Prostate gland (tissue), 2 donors: ENCODE measurements at regions of chr19 and their contacts with region 1.

Region 1: GRCh38 chr19:920051-920864 is 3.1 kb downstream of the KISS1R start:
- DNase-seq: no peak
- H3K4me3 ChIP-seq: peak overlapping the region in 1 of 2 donors; percentile 16
- H3K27ac ChIP-seq: no peak overlapping the region
- H3K4me1 ChIP-seq: peaks cover 7% of the 10 kb centered on the region
- H3K27me3 ChIP-seq: peaks cover 20% of the 10 kb centered on the region
- CTCF ChIP-seq: no peak
- POLR2A ChIP-seq: no peak

Region 2: GRCh38 chr19:308381-309205 is 611.7 kb before region 1 on chr19:
- intact Hi-C with region 1: no loop called
- DNase-seq: no peak
- H3K4me3 ChIP-seq: no peak overlapping the region
- H3K27ac ChIP-seq: no peak overlapping the region
- H3K4me1 ChIP-seq: no peaks in the 10 kb centered on the region
- H3K27me3 ChIP-seq: no peaks in the 10 kb centered on the region
- CTCF ChIP-seq: no peak
- POLR2A ChIP-seq: no peak

Region 3: DNA sequence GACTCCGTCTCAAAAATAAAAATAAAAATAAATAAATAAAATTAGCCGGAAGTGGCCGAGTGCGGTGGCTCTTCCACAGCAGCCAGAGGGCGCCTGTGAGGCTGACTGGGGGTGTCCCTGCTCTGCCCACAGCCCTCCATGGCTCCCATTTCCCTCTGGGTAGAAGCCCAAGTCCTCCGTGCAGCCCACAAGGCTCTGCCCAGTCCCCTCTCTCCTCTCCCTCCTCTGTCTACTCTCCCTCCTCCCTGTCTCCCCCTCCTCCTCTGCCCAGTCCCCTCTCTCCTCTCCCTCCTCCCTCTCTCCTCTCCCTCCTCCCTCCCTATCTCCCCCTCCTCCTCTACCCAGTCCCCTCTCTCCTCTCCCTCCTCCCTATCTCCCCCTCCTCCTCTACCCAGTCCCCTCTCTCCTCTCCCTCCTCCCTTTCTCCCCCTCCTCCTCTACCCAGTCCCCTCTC is 148.9 kb before region 1 on chr19:
- intact Hi-C with region 1: loop called (anchors 2 kb)
- DNase-seq: no peak
- H3K4me3 ChIP-seq: no peak overlapping the region
- H3K27ac ChIP-seq: no peak overlapping the region
- H3K4me1 ChIP-seq: no peaks in the 10 kb centered on the region
- H3K27me3 ChIP-seq: no peaks in the 10 kb centered on the region
- CTCF ChIP-seq: peak in 1 of 4 experiments; percentile 28
- POLR2A ChIP-seq: no peak

Region 4: DNA sequence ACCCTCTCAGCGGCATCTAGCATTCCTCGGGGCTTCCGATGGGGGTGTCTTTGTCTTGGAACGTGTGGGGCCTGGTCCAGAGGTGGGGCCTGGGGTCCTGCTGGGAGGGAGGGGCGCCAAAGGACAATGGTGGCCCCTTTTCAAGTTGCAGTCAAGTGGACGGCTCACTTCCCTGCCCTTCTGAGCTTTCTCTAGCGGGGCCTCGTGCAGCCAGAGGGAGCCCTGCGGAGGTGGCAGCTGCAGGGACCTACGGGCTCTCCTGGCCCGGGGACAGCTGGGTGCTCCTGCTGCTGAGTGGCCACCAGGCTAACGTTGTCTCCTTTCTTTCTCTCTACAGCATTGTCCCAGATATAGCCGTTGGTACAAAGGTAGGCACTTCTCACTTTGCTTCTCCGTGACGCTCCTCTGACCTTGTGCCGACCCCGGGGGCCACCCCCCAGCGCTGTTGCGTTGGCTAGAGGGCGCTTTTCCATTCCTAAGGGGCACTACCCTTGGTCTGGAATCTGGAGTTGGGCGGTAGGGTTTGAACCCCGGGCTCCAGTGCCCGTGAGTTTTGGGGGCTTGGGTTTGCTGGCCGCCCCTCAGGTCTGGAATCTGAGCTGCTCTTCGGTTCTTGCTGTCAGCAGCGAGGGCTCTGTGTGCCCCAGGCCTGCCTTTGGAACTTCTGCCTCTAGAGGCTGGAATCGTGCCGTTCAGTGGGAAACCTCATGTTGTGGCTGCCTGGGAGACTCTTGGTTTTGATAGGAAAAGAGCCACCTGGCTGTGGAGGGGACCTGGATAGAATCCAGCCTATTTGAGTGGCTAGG is 121.0 kb before region 1 on chr19:
- intact Hi-C with region 1: no loop called
- DNase-seq: no peak
- H3K4me3 ChIP-seq: peak overlapping the region; percentile 97 to 99
- H3K27ac ChIP-seq: peak overlapping the region; percentile 95 to 100
- H3K4me1 ChIP-seq: peaks cover 42% of the 10 kb centered on the region
- H3K27me3 ChIP-seq: no peaks in the 10 kb centered on the region
- CTCF ChIP-seq: no peak
- POLR2A ChIP-seq: no peak

Region 5: DNA sequence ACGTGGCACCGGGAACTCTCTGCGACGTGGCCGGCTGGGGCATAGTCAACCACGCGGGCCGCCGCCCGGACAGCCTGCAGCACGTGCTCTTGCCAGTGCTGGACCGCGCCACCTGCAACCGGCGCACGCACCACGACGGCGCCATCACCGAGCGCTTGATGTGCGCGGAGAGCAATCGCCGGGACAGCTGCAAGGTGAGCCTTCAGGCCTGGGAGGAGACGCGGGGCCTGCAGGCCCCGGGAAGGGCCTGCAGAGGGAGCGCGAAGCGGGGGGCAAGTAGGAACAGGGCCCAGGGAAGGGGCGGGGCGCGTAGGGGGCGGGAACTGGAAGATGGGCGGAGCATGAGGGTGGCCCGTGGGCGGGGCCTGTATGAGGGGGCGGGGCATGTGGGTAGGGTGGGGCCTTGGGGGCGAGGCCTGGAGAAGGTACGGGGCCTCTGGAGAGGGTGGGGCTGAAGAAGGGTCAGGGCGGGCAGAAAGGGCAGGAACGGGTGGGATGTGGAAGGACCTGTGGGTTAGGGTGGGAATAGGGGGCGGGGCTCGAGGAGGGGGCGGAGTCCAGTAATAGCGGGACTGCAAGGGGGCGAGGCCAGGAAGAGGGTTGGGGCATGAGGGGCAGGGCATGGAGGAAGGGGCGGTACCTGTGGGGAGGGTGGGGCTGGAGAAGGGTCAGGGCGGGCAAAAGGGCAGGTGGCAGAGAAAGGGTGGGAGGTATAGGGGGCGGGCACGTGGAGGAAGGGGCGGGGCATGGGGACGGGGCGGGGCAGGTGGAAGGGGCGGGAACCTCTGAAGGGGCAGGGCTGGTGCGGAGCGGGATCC is 58.3 kb before region 1 on chr19:
- intact Hi-C with region 1: loop called (anchors 2 kb)
- DNase-seq: no peak
- H3K4me3 ChIP-seq: no peak overlapping the region
- H3K27ac ChIP-seq: no peak overlapping the region
- H3K4me1 ChIP-seq: no peaks in the 10 kb centered on the region
- H3K27me3 ChIP-seq: no peaks in the 10 kb centered on the region
- CTCF ChIP-seq: no peak
- POLR2A ChIP-seq: no peak